Sigmoid colon (tissue), 7 donors: ENCODE measurements at regions of chr9 and their contacts with region 1.

Region 1: GRCh38 chr9:16352791-16353411 is 517.6 kb downstream of the BNC2 start:
- DNase-seq: no peak
- H3K4me3 ChIP-seq: no peak overlapping the region
- H3K27ac ChIP-seq: no peak overlapping the region
- H3K4me1 ChIP-seq: no peaks in the 10 kb centered on the region
- H3K27me3 ChIP-seq: no peaks in the 10 kb centered on the region
- CTCF ChIP-seq: no peak
- EP300 ChIP-seq: no peak
- POLR2A ChIP-seq: no peak

Region 2: DNA sequence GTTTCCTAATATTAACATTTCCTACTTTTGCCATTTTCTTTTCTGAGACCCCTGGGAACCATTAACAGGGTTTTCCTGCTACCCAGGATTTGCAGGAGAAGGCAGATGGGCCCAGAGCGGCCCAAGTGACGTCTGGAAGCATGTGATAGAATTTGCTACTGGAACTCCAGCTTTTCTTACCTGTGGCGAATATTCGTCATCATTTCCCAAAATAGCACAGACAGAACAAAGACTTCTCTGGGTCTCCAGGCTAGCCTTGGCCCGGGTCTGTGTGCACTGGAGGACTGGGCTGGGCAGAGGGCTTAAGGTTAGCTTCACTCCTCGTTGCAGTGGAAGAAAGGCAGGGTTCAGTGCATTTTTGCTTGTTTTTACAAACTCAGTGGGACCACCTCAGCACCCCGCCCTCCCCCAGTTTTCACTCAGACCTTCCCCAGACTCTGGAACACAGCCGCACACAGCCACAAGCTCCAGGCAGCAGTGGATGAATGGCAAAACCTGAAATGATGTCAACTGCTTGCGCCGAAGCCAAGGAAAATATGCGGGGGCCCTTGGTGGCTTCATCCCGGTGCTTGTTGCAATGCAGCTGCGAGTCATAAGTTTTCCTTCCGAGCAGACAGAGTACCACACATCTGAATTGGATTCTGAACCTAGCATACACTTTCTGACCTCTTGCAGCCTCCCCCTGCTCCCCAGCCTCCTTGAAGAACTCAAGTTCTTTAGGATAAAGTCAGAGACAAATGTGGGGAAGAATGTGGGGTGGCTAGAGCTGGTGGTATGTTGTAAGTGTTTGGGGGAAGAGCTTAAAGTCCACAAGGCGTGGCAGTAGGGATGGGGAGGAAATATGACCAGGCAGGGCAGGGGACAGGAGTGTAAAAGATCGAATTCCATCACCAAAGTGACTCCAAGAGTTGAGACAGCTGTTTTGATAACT is 214.1 kb before region 1 on chr9:
- intact Hi-C with region 1: no loop called
- DNase-seq: no peak
- H3K4me3 ChIP-seq: no peak overlapping the region
- H3K27ac ChIP-seq: no peak overlapping the region
- H3K4me1 ChIP-seq: peaks cover 0 to 7% (median 1%) of the 10 kb centered on the region in 4 donors
- H3K27me3 ChIP-seq: no peaks in the 10 kb centered on the region
- CTCF ChIP-seq: no peak
- EP300 ChIP-seq: no peak
- POLR2A ChIP-seq: no peak

Region 3: DNA sequence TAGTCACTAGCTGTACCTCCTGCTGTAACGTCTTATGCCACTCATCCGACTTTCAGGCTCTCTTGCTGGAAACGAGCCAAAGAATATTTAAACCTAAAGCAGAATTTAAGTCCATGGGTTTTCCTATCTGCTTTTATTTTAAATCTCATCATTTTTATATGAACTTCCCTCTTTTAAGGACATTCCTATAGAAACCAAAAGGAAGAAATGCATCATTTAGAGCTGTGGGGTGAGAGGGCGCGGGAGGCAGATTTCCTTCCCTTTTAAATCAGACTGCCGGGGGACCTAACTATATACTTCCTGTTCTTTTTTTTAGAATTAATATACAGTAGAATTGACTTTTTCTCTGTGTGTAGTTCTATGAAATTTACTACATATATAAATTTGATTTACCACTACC is 48.8 kb after region 1 on chr9:
- intact Hi-C with region 1: loop called (anchors 10 kb)
- DNase-seq: no peak
- H3K4me3 ChIP-seq: no peak overlapping the region
- H3K27ac ChIP-seq: no peak overlapping the region
- H3K4me1 ChIP-seq: no peaks in the 10 kb centered on the region
- H3K27me3 ChIP-seq: no peaks in the 10 kb centered on the region
- CTCF ChIP-seq: no peak
- EP300 ChIP-seq: no peak
- POLR2A ChIP-seq: no peak